Activated T-helper 2 cell treated with anti-CD3 and anti-CD28 coated beads, Interferon-gamma antibody, Interleukin-2, Interleukin-4, amounts not matched to agents 10 μg/mL and 5 μg/mL and 100 μg/mL, durations not matched to agents 14 hours and 24 hours and 36 hours (primary cell): ENCODE measurements at regions of chr15 and their contacts with region 1.

Region 1: DNA sequence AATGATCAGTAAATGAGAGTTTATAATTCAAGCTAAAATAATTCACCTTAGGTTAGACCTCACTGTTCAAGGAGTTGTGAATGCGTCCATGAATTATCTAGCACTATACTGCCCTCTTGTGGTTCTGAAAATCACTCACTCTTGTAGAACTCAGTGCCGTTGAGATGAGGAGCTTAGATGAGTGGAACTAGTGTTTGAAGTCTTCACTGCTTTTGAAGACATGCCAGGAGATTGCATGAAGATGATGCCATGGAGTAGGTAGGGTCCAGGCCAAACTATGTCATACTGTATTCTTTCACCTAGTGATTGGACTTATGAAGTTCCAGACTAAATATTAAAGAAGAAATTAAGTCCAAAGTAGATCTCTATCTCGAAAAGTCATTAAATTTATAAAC is 28.8 kb downstream of the LYSMD4 start:
- DNase-seq: no peak
- H3K4me3 Mint-ChIP-seq: no peak overlapping the region
- H3K27ac Mint-ChIP-seq: no peak overlapping the region
- H3K4me1 Mint-ChIP-seq: peaks cover 44% of the 10 kb centered on the region
- H3K27me3 Mint-ChIP-seq: no peaks in the 10 kb centered on the region

Region 2: GRCh38 chr15:99264125-99264524 is 440.3 kb before region 1 on chr15:
- intact Hi-C with region 1: no loop called
- DNase-seq: no peak
- H3K4me3 Mint-ChIP-seq: no peak overlapping the region
- H3K27ac Mint-ChIP-seq: no peak overlapping the region
- H3K4me1 Mint-ChIP-seq: peaks cover 10% of the 10 kb centered on the region
- H3K27me3 Mint-ChIP-seq: no peaks in the 10 kb centered on the region

Region 3: DNA sequence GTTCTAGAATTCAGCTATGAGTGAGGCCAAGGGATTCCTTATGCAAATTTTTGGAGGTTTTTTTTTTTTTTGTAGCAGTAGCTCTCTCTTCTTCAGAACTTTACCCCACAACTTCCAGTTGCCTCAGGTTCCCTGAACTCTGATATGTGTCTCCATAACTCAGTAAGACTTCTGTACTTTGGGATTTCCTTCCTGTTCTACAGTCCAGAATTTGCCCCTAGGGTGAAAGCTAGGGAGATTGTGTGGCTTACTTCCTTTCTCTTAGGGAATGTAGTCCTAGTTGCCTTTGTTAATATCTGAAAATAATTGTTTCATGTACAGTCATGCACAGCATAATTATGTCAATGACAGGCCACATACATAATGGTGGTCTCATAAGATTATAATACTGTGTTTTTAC is 422.3 kb before region 1 on chr15:
- intact Hi-C with region 1: loop called (anchors 1 kb)
- DNase-seq: no peak
- H3K4me3 Mint-ChIP-seq: no peak overlapping the region
- H3K27ac Mint-ChIP-seq: no peak overlapping the region
- H3K4me1 Mint-ChIP-seq: peaks cover 46% of the 10 kb centered on the region
- H3K27me3 Mint-ChIP-seq: no peaks in the 10 kb centered on the region

Region 4: DNA sequence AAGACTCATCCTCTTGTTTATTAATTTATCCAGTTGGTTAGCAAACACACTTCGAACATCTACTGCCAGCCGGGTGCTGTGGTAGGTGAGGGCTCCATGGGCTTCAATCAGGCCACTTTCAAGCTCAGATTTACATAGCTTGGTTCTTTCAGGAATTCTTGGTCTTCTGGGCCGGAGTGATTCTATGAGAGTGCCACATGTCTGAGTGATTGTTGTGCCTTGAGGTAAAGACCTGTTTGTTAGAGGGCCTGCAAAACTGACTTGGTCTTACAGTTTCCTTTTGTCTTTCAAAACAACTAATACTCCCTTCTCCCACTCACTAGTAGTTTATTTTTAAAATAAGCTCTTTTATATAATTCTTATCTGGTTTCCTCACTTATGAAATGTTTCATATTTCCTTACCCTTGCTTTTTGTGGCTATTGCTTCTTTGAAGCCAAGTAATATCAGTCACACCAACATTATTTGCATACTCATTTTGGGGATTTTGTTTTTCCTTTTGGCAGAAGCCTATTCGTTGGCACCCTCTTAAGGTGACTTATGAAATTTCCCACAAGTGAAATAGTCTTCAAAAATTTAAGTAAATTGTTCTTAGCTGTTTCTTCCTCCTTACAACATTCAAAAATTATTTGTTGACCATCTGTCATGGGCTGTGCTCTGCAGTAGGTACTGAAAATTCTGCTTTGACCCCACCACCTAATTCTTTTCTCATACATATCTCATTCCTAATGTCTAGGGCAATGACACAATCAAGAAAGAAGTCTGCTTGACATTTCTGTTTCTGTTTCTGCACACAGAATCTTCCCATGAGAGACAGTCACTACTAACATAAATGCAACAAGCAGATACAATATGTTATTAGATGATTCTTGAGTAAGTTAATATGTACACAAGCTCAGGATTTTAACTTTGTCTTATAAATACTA is 333.0 kb before region 1 on chr15:
- intact Hi-C with region 1: loop called (anchors 5 kb)
- DNase-seq: no peak
- H3K4me3 Mint-ChIP-seq: peak overlapping the region; percentile 18
- H3K27ac Mint-ChIP-seq: peak overlapping the region; percentile 65
- H3K4me1 Mint-ChIP-seq: peaks cover 21% of the 10 kb centered on the region
- H3K27me3 Mint-ChIP-seq: no peaks in the 10 kb centered on the region

Region 5: GRCh38 chr15:99504823-99505551 is 199.5 kb before region 1 on chr15:
- intact Hi-C with region 1: loop called (anchors 2 kb)
- DNase-seq: no peak
- H3K4me3 Mint-ChIP-seq: peak overlapping the region; percentile 35
- H3K27ac Mint-ChIP-seq: peak overlapping the region; percentile 78
- H3K4me1 Mint-ChIP-seq: peaks cover 63% of the 10 kb centered on the region
- H3K27me3 Mint-ChIP-seq: no peaks in the 10 kb centered on the region

Region 6: DNA sequence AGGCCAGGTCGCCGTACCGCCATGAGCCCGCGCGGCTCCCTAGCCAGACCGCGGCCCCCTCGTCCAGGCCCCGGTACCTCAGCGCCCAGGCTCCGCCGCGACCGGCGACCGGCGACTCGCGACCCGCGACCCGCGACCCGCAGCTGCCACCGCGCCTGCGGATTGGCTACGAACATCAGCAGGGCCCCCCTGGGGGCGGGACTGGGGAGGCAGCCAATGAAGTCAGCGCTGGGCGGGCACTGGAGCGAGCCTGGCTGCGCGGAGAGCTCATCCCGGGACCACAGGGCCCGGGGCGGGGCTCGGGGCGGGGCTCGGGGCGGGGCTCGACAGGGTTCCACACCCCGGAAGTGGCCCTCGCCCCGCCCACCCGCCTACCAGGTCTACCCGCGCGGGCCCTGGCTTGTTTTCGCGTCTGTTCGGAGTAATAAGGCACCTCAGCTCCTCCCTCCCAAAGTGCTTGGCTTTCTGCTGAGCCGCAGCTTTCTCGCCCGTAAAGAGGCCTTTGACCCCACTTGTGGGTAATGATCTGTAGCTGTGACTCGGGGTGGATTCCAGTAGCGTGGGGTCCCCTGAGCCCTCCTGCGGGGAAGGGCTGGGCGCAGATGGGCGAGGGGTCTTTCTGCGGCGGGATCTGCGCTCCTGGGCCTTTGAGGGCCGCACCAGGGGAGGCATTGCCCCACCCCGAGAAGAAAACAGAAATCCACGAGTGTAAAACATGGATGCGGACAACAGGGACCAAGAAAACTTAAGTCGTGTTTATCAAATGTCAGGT is 29.0 kb after region 1 on chr15 and contains the start of gene LYSMD4:
- intact Hi-C with region 1: loop called (anchors 1 kb)
- DNase-seq: peak; percentile 96
- H3K4me3 Mint-ChIP-seq: peak within 1 kb of the TSS; percentile 76
- H3K27ac Mint-ChIP-seq: peak within 1 kb of the TSS; percentile 86
- H3K4me1 Mint-ChIP-seq: peaks cover 22% of the 10 kb centered on the region
- H3K27me3 Mint-ChIP-seq: no peaks in the 10 kb centered on the region
- total RNA-seq, gene LYSMD4: 6.8 and 7.6 TPM in 2 replicates